ENCODE measurements at regions of chr13 and their contacts with region 1.

Region 1: GRCh38 chr13:51222037-51222685 is at the start of gene FAM124A:
- DNase-seq: peak; percentile 53
- H3K4me3 ChIP-seq: peak within 1 kb of the TSS; percentile 48 to 69 (median 65)
- H3K27ac ChIP-seq: peak within 1 kb of the TSS; percentile 52 to 76 (median 68)
- H3K4me1 ChIP-seq: peaks cover 0 to 19% (median 7%) of the 10 kb centered on the region in 4 donors
- H3K27me3 ChIP-seq: peaks cover 40% of the 10 kb centered on the region
- CTCF ChIP-seq: peak in 2 of 5 experiments; percentile 12 to 25
- EP300 ChIP-seq: no peak
- POLR2A ChIP-seq: no peak
- total RNA-seq, gene FAM124A: 1.9 to 17.7 (median 2.7) TPM

Region 2: GRCh38 chr13:51276636-51277035 is 54.5 kb after region 1 on chr13:
- in situ Hi-C with region 1: no loop called
- intact Hi-C with region 1: loop called (anchors 5 kb)
- DNase-seq: peak; percentile 31
- H3K4me3 ChIP-seq: no peak overlapping the region
- H3K27ac ChIP-seq: peak overlapping the region in 2 of 4 donors; percentile 26 to 41
- H3K4me1 ChIP-seq: peaks cover 0 to 11% (median 7%) of the 10 kb centered on the region in 4 donors
- H3K27me3 ChIP-seq: no peaks in the 10 kb centered on the region
- CTCF ChIP-seq: no peak
- EP300 ChIP-seq: no peak
- POLR2A ChIP-seq: no peak